ENCODE measurements at regions of chr5 and their contacts with region 1.

Region 1: GRCh38 chr5:138213161-138214029 is at the start of gene CDC23:
- H3K4me3 Mint-ChIP-seq: peak within 1 kb of the TSS; percentile 99
- H3K27ac Mint-ChIP-seq: peak within 1 kb of the TSS; percentile 92
- H3K4me1 Mint-ChIP-seq: peaks cover 17% of the 10 kb centered on the region
- H3K27me3 Mint-ChIP-seq: no peaks in the 10 kb centered on the region

Region 2: DNA sequence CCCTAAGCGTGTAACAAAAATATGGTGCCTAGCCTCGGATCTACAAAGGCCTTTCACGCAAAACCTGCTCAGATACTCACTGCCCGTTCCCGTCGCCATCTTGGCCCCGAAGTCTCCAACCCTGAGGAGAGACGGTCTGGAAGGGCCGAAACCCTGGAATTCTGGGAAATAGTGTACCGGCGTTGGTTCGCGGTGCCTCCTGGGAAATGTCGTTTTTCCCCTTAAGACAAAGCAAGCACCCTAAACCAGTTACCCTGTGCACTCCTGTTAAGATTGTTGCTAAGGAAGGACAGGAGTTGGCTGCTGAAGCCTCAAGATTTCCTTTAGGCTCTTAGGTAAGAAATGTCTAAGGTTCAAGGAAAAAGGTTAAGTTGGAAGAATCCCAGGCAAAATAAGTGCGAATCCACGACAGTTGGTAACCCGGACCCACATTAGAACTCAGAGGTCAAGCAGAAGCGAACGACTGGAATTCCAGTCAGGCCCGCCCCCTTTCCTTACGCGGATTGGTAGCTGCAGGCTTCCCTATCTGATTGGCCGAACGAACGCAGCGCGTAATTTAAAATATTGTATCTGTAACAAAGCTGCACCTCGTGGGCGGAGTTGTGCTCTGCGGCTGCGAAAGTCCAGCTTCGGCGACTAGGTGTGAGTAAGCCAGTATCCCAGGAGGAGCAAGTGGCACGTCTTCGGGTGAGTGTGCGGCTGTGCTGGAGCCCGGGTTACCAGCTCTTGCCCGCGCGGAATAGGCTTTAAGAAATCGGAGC is 34.7 kb before region 1 on chr5 and contains the starts of genes BRD8 and KIF20A:
- intact Hi-C with region 1: loop called (anchors 1 kb)
- H3K4me3 Mint-ChIP-seq: no peak within 1 kb of the TSS
- H3K27ac Mint-ChIP-seq: no peak within 1 kb of the TSS
- H3K4me1 Mint-ChIP-seq: peaks cover 10% of the 10 kb centered on the region
- H3K27me3 Mint-ChIP-seq: no peaks in the 10 kb centered on the region

Region 3: GRCh38 chr5:138241688-138242571 is 28.5 kb after region 1 on chr5:
- intact Hi-C with region 1: no loop called
- H3K4me3 Mint-ChIP-seq: peak overlapping the region; percentile 62
- H3K27ac Mint-ChIP-seq: no peak overlapping the region
- H3K4me1 Mint-ChIP-seq: peaks cover 19% of the 10 kb centered on the region
- H3K27me3 Mint-ChIP-seq: peaks cover 28% of the 10 kb centered on the region

Measured in dendritic cell treated with granulocyte-macrophage colony-stimulating factor and Interleukin-4, amounts not matched to agents 40 ng/mL and 50 ng/mL, for 4 days (primary cell).